ENCODE measurements at regions of chr4 and their contacts with region 1.

Region 1: DNA sequence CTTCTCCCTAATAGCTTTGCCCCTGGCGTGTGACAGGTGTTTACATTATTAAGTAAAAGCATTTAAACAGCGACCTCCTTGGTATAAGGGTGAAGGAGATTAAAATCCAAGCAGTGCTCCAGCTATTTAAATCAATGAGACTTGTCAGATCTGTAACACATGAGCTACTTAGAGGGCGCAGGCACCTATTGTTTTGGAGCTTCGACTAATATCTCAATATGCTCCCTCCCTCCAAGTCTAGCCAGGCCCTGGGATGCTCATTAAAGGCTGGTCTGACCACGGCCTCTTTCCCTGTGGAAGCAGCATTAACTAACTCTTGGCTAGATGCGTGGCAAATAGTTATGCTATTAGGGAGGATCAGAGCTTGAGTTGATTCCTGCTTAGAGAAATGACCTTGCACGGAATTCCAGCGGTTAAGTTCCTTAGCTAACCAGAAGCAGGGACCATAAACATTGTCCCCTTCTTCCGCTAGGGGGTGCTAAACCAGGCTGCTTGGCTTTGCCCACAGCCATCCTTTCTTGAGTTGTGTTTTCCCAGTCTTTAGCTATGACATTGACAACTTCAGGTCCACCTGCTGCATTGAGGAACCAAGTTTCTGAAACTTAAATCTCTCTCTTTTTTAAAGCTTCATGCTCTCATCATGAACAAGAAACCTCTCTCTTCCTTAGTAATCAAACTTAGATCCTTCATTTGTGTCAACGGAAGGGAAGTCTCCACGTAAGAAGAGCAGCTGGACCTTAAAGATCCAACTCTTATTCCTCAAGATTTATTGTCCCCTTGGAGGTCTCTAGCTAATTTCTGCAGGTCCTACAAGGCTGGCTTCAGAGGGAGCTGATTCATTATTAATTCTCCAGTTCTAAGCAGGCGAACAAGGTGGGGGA is 80.7 kb upstream of the IGFBP7 start:
- DNase-seq: peak; percentile 78
- ATAC-seq: peak; percentile 38
- H3K4me3 Mint-ChIP-seq: no peak overlapping the region
- H3K27ac Mint-ChIP-seq: no peak overlapping the region
- H3K4me1 Mint-ChIP-seq: peaks cover 78% of the 10 kb centered on the region
- H3K27me3 Mint-ChIP-seq: peaks cover 20% of the 10 kb centered on the region
- CTCF ChIP-seq: peak; percentile 63

Region 2: GRCh38 chr4:57037982-57038604 is 152.7 kb before region 1 on chr4:
- CTCF ChIA-PET with region 1: interaction called, 14 read pairs
- POLR2A ChIA-PET with region 1: no interaction called
- DNase-seq: peak; percentile 85
- ATAC-seq: peak; percentile 92
- H3K4me3 Mint-ChIP-seq: peak overlapping the region; percentile 52
- H3K27ac Mint-ChIP-seq: no peak overlapping the region
- H3K4me1 Mint-ChIP-seq: peaks cover 13% of the 10 kb centered on the region
- H3K27me3 Mint-ChIP-seq: no peaks in the 10 kb centered on the region; the same call in 1 of the 2 replicates
- CTCF ChIP-seq: peak; percentile 70; the same call in 1 of the 2 replicates

Region 3: DNA sequence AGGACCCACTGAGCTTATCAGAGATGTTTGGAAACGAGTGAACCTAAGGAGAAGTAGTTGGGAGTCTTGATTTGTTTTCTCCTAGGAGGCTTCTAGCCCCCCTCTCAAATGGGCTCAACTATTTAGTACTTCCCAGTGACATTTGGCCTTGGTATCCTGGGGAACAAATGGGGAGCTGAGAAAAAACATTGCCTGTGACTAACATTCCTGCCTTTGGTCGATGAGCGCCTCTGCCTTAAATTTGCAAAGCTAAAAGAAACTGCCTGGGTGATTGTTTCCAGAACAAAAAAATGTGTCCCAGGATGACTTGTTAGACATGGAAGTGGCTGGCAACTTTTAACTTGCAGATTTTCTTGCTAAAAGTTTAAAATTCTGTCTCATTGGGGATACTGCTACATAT is 21.9 kb before region 1 on chr4:
- CTCF ChIA-PET with region 1: interaction called, 93 read pairs
- POLR2A ChIA-PET with region 1: no interaction called
- DNase-seq: no peak
- ATAC-seq: peak; percentile 49
- H3K4me3 Mint-ChIP-seq: no peak overlapping the region
- H3K27ac Mint-ChIP-seq: peak overlapping the region; percentile 71
- H3K4me1 Mint-ChIP-seq: peaks cover 42% of the 10 kb centered on the region
- H3K27me3 Mint-ChIP-seq: peaks cover 15% of the 10 kb centered on the region
- CTCF ChIP-seq: no peak

Region 4: DNA sequence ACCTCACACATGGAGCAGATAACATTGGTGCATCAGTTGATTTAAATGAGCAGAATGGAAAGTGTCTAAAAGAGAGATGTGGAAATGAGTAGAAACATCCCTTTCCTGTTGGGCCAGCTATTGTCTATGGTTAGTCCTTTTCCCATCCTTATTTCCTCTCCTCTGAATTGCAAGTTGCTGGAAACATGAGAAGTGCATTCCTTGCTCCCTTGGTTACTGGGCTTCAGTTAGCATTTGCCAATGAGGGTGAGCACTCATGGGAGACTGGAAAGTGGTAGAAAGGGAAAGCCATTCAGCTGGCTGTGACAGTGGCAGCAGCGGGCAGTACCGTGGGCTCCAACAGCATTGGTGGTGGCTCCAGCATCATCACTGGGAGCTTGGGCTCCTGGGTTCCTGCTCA is 15.3 kb after region 1 on chr4:
- CTCF ChIA-PET with region 1: interaction called, 35 read pairs
- POLR2A ChIA-PET with region 1: no interaction called
- DNase-seq: no peak
- ATAC-seq: peak; percentile 60
- H3K4me3 Mint-ChIP-seq: no peak overlapping the region
- H3K27ac Mint-ChIP-seq: no peak overlapping the region
- H3K4me1 Mint-ChIP-seq: peaks cover 13% of the 10 kb centered on the region
- H3K27me3 Mint-ChIP-seq: no peaks in the 10 kb centered on the region; the same call in 1 of the 2 replicates
- CTCF ChIP-seq: no peak

Region 5: GRCh38 chr4:57280481-57280880 is 89.6 kb after region 1 on chr4:
- CTCF ChIA-PET with region 1: interaction called, 10 read pairs
- POLR2A ChIA-PET with region 1: no interaction called
- DNase-seq: no peak
- ATAC-seq: no peak
- H3K4me3 Mint-ChIP-seq: no peak overlapping the region
- H3K27ac Mint-ChIP-seq: no peak overlapping the region
- H3K4me1 Mint-ChIP-seq: peaks cover 13% of the 10 kb centered on the region
- H3K27me3 Mint-ChIP-seq: no peaks in the 10 kb centered on the region
- CTCF ChIP-seq: no peak

Region 6: DNA sequence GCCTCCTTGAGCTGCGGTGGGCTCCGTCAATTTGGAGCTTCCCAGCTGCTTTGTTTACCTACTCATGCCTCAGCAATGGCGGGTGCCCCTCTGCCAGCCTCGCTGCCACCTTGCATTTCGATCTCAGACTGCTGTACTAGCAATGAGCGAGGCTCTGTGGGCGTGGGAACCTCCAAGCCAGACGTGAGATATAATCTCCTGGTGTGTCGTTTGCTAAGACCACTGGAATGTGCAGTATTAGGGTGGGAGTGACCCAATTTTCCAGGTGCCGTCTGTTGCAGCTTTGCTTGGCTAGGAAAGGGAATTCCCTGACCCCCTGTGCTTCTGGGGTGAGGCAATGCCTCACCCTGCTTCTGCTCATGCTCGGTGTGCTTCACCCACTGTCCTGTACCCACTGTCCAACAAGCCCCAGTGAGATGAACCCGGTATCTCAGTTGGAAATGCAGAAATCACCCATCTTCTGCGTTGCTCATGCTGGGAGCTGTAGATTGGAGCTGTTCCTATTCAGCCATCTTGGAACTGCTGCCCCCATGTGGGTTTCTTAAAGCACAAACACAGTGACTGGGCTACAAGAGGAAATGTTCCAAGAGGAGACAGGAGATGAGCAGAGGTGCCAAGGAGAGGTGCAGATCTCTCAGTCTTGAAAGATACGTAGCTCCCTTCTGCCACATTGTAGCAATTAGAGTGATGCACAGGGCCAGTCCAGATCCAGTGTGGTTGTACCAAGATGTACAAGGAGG is 112.3 kb after region 1 on chr4:
- CTCF ChIA-PET with region 1: interaction called, 14 read pairs
- POLR2A ChIA-PET with region 1: no interaction called
- DNase-seq: no peak
- ATAC-seq: peak; percentile 52; the same call in 1 of the 2 replicates
- H3K4me3 Mint-ChIP-seq: no peak overlapping the region
- H3K27ac Mint-ChIP-seq: no peak overlapping the region
- H3K4me1 Mint-ChIP-seq: no peaks in the 10 kb centered on the region
- H3K27me3 Mint-ChIP-seq: peaks cover 23% of the 10 kb centered on the region
- CTCF ChIP-seq: no peak

Region 7: GRCh38 chr4:57370691-57371090 is 179.8 kb after region 1 on chr4:
- CTCF ChIA-PET with region 1: no interaction called
- POLR2A ChIA-PET with region 1: no interaction called
- DNase-seq: no peak
- ATAC-seq: no peak
- H3K4me3 Mint-ChIP-seq: no peak overlapping the region
- H3K27ac Mint-ChIP-seq: no peak overlapping the region
- H3K4me1 Mint-ChIP-seq: peaks cover 34% of the 10 kb centered on the region
- H3K27me3 Mint-ChIP-seq: 0 out of 2 replicates have a peak, but pooled peaks cover 4% of the 10 kb centered on the region
- CTCF ChIP-seq: no peak